ENCODE measurements at regions of chr2 and their contacts with region 1.

Region 1: GRCh38 chr2:143128681-143129580 is at the start of gene ARHGAP15:
- DNase-seq: peak; percentile 44 to 91
- ATAC-seq: peak; percentile 85 to 93 (median 92)
- H3K4me3 ChIP-seq: peak within 1 kb of the TSS; percentile 77
- H3K4me3 Mint-ChIP-seq: peak within 1 kb of the TSS; percentile 89
- H3K27ac ChIP-seq: peak within 1 kb of the TSS; percentile 95
- H3K27ac Mint-ChIP-seq: peak within 1 kb of the TSS; percentile 96
- H3K4me1 ChIP-seq: peaks cover 17% of the 10 kb centered on the region
- H3K4me1 Mint-ChIP-seq: peaks cover 40 to 55% of the 10 kb centered on the region in 2 donors
- H3K27me3 ChIP-seq: no peaks in the 10 kb centered on the region
- H3K27me3 Mint-ChIP-seq: no peaks in the 10 kb centered on the region
- CTCF ChIP-seq: no peak
- total RNA-seq, gene ARHGAP15: 148 to 168 (median 165) TPM

Region 2: DNA sequence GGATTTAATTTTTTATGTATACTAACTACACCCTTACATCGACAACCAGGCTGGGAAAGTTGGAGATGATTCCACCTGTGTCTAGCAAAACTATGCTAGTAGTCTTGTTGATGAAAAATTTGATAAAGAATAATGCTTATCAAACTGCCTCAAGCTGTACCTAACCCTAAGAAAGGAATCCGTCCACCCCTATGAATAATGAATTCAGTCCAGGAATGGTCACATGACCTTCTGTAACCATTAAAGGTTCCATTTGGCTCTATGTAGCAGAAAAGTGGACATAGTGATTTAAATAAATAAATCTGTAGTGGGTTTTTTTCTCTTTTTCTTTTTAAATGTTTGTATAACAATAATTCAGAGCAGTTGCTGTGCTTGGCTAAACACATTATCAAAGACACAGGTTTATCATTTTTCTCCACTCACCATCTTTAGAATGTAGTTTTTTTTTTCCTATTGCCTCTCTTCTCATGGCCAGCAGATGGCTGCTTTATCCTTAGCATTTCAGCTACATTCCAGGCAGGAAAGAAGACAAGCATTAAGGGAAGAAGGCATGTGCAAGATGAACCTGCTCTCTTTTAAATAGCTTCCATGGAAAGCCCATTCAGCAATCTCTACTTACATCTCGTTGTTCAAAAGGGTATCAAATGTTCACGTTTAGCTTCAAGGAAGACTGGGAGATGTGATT is 42.7 kb after region 1 on chr2:
- intact Hi-C with region 1: no loop called
- DNase-seq: no peak
- ATAC-seq: no peak
- H3K4me3 ChIP-seq: no peak overlapping the region
- H3K4me3 Mint-ChIP-seq: no peak overlapping the region
- H3K27ac ChIP-seq: no peak overlapping the region
- H3K27ac Mint-ChIP-seq: peak overlapping the region; percentile 5 to 45
- H3K4me1 ChIP-seq: peaks cover 5% of the 10 kb centered on the region
- H3K4me1 Mint-ChIP-seq: peaks cover 60 to 62% of the 10 kb centered on the region in 2 donors
- H3K27me3 ChIP-seq: no peaks in the 10 kb centered on the region
- H3K27me3 Mint-ChIP-seq: no peaks in the 10 kb centered on the region
- CTCF ChIP-seq: no peak

Region 3: DNA sequence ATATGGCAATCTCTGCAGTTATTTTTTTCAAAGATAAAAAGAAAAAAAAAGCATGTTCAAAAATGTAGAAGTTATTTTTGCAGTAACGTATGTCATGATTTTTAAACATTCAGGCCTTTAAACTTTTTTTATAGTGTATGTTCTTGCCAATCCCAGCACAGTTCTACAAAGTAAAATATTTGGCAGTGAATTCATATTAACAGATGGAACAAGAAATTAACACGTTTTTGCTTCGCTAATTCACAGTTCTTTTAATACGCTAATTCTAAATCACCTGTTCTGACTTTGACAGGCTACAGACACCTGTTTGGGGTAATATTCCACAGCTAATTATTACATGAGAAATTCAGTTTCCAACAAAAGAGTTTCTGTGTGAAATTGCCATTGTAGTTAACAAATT is 183.5 kb after region 1 on chr2:
- intact Hi-C with region 1: no loop called
- DNase-seq: no peak
- ATAC-seq: no peak
- H3K4me3 ChIP-seq: no peak overlapping the region
- H3K4me3 Mint-ChIP-seq: no peak overlapping the region
- H3K27ac ChIP-seq: no peak overlapping the region
- H3K27ac Mint-ChIP-seq: peak overlapping the region; percentile 7 to 63
- H3K4me1 ChIP-seq: no peaks in the 10 kb centered on the region
- H3K4me1 Mint-ChIP-seq: peaks cover 25 to 32% of the 10 kb centered on the region in 2 donors
- H3K27me3 ChIP-seq: no peaks in the 10 kb centered on the region
- H3K27me3 Mint-ChIP-seq: no peaks in the 10 kb centered on the region
- CTCF ChIP-seq: no peak

Region 4: GRCh38 chr2:144510294-144510991 is 1381.5 kb after region 1 on chr2:
- intact Hi-C with region 1: loop called (anchors 2 kb)
- DNase-seq: peak; percentile 69 to 84
- ATAC-seq: peak; percentile 59 to 80 (median 69)
- H3K4me3 ChIP-seq: peak overlapping the region; percentile 39
- H3K4me3 Mint-ChIP-seq: peak overlapping the region; percentile 95
- H3K27ac ChIP-seq: peak overlapping the region; percentile 92
- H3K27ac Mint-ChIP-seq: no peak overlapping the region
- H3K4me1 ChIP-seq: peaks cover 62% of the 10 kb centered on the region
- H3K4me1 Mint-ChIP-seq: peaks cover 94 to 97% of the 10 kb centered on the region in 2 donors
- H3K27me3 ChIP-seq: no peaks in the 10 kb centered on the region
- H3K27me3 Mint-ChIP-seq: peaks cover 4 to 7% of the 10 kb centered on the region in 2 donors
- CTCF ChIP-seq: no peak

Measured in natural killer cell (primary cell).